A673 (cell line): ENCODE measurements at regions of chr5 and their contacts with region 1.

Region 1: GRCh38 chr5:147539053-147539452 is 29.2 kb upstream of the DPYSL3 start:
- DNase-seq: no peak
- H3K4me3 ChIP-seq: no peak overlapping the region
- H3K27ac ChIP-seq: no peak overlapping the region
- H3K4me1 ChIP-seq: no peaks in the 10 kb centered on the region
- H3K27me3 ChIP-seq: no peaks in the 10 kb centered on the region
- CTCF ChIP-seq: no peak

Region 2: DNA sequence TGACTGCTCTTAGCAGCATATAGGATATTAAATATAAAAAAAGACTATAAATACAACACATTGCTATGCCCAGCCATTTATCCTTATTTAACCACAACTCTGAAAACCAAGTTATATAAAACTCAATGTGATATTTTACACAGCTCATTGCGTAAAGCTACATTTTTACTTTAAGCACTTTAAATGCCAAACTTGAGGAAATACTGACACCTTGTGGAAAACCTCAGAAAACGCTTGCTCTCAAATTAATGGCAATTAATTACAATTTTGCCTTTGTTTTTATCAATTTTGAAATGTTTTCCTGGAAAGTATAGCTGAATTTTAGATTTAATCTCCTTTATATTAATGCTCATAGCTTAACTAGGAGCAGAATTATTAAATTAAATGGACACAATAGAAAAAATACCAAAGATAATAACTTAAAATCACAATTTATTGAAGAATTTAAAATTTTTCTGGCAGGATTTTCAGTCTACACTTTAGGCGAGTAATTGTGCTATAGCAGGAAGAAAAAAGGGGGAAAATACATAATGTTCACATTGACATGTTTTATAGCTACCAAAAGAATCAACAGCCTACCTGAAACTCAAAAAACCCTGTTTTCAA is 1408.5 kb before region 1 on chr5:
- CTCF ChIA-PET with region 1: no interaction called
- POLR2A ChIA-PET with region 1: no interaction called
- intact Hi-C with region 1: no loop called
- DNase-seq: peak; percentile 55
- H3K4me3 ChIP-seq: no peak overlapping the region
- H3K27ac ChIP-seq: peak overlapping the region; percentile 57
- H3K4me1 ChIP-seq: peaks cover 13% of the 10 kb centered on the region
- H3K27me3 ChIP-seq: no peaks in the 10 kb centered on the region
- CTCF ChIP-seq: peak; percentile 85

Region 3: GRCh38 chr5:146369691-146370090 is 1169.4 kb before region 1 on chr5:
- CTCF ChIA-PET with region 1: no interaction called
- POLR2A ChIA-PET with region 1: interaction called, 11 read pairs
- intact Hi-C with region 1: no loop called
- DNase-seq: no peak
- H3K4me3 ChIP-seq: no peak overlapping the region
- H3K27ac ChIP-seq: no peak overlapping the region
- H3K4me1 ChIP-seq: peaks cover 2% of the 10 kb centered on the region
- H3K27me3 ChIP-seq: no peaks in the 10 kb centered on the region
- CTCF ChIP-seq: no peak